ENCODE measurements at regions of chr1 and their contacts with region 1.

Region 1: GRCh38 chr1:46522184-46522968 is 29.1 kb downstream of the KNCN start:
- DNase-seq: peak in 1 of 2 experiments; percentile 53
- ATAC-seq: peak; percentile 31 to 32
- H3K4me3 ChIP-seq: no peak overlapping the region
- H3K27ac ChIP-seq: peak overlapping the region; percentile 85 to 97
- H3K4me1 ChIP-seq: peaks cover 77% of the 10 kb centered on the region
- CTCF ChIP-seq: no peak
- EP300 ChIP-seq: peak; percentile 37 to 72; a peak in 3 of 5 replicates
- POLR2A ChIP-seq: no peak
- RAD21 ChIP-seq: no peak

Region 2: DNA sequence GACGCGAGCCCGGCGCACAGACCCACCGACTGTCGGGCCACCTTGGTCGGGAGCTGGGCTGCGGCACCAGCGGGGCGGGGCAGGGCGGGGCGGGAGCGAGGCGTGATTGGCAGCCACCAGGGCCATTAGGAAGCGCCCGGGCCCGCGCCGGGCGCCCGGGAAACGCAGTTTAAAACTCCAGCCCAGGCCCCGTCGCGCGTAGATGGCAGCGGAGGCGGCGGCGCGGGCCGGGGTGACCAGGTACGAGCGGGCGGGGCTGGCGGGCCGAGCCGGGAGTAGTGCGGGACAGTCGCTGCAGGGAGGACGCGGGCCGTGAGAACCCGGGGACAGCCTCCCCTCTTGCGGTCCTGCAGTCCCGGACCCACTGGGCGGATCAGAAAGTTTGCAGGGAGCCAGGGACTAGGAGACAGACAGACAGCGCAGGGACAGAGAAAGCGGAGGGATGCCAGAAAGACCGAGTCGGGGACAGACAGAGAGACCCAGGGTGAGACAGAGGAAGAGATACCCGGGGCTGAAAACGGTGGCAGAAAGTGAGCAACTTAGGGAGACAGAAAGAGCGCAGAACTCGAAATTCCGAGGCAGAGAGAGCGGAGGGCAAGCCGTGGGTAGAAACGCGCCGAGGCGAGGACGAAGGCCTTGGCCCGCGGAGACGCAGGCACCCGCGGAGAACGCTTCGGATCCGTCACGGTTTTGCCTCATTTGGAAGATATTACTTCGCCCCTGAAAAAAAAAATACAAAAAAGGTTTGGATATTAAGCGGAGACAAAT is 32.6 kb before region 1 on chr1 and contains the start of gene DMBX1:
- CTCF ChIA-PET with region 1: interaction called, 235 read pairs
- POLR2A ChIA-PET with region 1: no interaction called
- DNase-seq: peak; percentile 35 to 85
- ATAC-seq: peak; percentile 88 to 94
- H3K4me3 ChIP-seq: peak within 1 kb of the TSS; percentile 56
- H3K27ac ChIP-seq: peak within 1 kb of the TSS; percentile 62 to 85; a peak in 5 of 6 replicates
- H3K4me1 ChIP-seq: peaks cover 4% of the 10 kb centered on the region; the same call in 1 of the 3 replicates
- CTCF ChIP-seq: no peak
- EP300 ChIP-seq: no peak
- POLR2A ChIP-seq: no peak
- RAD21 ChIP-seq: no peak
- polyA plus RNA-seq, gene DMBX1: 0.40 and 0.44 TPM in 2 replicates

Region 3: GRCh38 chr1:46595127-46595526 is 72.8 kb after region 1 on chr1:
- CTCF ChIA-PET with region 1: no interaction called
- POLR2A ChIA-PET with region 1: no interaction called
- DNase-seq: no peak
- ATAC-seq: no peak
- H3K4me3 ChIP-seq: no peak overlapping the region
- H3K27ac ChIP-seq: no peak overlapping the region
- H3K4me1 ChIP-seq: no peaks in the 10 kb centered on the region
- CTCF ChIP-seq: no peak
- EP300 ChIP-seq: no peak
- POLR2A ChIP-seq: no peak
- RAD21 ChIP-seq: no peak

Region 4: DNA sequence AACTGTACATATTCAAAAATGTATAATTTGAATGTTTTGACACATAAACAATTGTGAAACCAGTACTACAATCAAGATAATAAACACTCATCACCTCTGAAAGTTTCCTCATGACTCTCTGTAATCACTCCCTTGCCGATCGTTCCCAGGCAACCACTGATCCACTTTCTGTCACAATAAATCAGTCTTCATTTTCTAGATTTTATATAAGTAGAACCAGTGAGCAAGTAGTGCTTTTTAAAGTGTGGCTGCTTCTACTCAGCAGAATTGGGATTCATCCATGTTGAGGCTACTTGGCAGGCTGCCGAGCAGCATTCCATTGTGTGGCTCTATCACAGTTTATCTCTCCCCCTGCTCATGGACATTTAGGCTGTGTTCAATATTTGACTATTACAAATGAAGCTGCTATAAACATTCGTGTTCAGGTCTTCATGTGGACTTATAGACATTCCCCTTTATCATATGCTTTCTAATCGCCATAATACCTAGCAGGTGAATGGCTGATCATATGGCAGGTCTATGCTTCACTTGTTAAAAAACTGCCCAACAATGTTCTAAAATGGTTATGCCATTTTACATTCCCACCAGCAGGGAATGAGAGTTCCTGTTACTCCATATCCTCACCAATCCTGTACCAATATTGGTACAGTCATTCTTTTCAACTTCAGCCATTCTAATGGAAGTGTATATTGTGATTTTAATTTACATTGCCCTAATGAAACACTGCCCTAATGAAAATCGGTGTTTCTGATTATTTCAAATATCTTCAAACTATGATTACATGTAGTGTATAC is 169.8 kb after region 1 on chr1:
- CTCF ChIA-PET with region 1: no interaction called
- POLR2A ChIA-PET with region 1: no interaction called
- DNase-seq: no peak
- ATAC-seq: peak in 1 of 2 experiments; percentile 56; a peak in 2 of 6 replicates
- H3K4me3 ChIP-seq: no peak overlapping the region
- H3K27ac ChIP-seq: no peak overlapping the region
- H3K4me1 ChIP-seq: no peaks in the 10 kb centered on the region
- CTCF ChIP-seq: no peak
- EP300 ChIP-seq: no peak
- POLR2A ChIP-seq: no peak
- RAD21 ChIP-seq: no peak

Region 5: DNA sequence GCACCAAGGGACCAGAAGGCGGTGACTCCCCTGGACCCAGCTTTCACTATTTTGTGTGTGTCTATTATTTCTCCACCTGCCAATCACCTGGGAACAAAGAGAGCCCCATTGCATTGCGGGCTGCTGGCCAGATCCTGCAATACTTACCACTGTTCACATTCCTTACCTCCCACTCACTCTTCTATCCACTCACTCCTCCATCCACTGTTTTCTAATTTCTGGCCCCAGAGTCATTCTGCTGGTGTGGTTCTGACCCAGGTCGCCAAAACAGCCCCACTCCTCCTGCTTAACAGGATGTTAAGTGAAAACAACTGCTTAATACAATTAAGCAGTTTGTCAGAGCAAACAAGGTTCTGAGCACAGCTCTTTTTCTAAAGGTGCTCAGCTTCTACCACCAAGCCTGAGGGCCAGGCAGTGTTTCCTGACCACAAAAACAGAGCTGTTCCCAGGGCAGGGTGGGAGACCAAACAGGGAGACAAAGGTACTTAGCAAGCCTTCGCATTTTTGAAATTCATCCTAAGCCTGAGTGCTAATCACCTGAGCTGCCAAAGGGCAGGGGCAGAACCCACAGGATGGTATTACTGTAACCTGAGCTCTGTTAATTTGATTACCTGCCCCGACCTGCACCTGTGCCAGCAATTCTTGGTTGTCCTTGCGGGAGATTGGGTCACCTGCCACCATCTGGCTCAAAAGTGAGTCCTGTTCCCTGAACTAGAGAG is 235.0 kb after region 1 on chr1:
- CTCF ChIA-PET with region 1: no interaction called
- POLR2A ChIA-PET with region 1: no interaction called
- DNase-seq: no peak
- ATAC-seq: no peak
- H3K4me3 ChIP-seq: no peak overlapping the region
- H3K27ac ChIP-seq: no peak overlapping the region
- H3K4me1 ChIP-seq: no peaks in the 10 kb centered on the region
- CTCF ChIP-seq: no peak
- EP300 ChIP-seq: no peak
- POLR2A ChIP-seq: no peak
- RAD21 ChIP-seq: no peak

Measured in A549 (cell line).